GM12878 (cell line): ENCODE measurements at regions of chr13 and their contacts with region 1.

Region 1: GRCh38 chr13:46775385-46776107 is 21.4 kb downstream of the ESD start:
- DNase-seq: no peak
- ATAC-seq: no peak
- H3K4me3 ChIP-seq: no peak overlapping the region
- H3K27ac ChIP-seq: no peak overlapping the region
- H3K4me1 ChIP-seq: no peaks in the 10 kb centered on the region
- H3K27me3 ChIP-seq: no peaks in the 10 kb centered on the region
- CTCF ChIP-seq: no peak
- EP300 ChIP-seq: no peak
- POLR2A ChIP-seq: no peak
- RAD21 ChIP-seq: no peak

Region 2: DNA sequence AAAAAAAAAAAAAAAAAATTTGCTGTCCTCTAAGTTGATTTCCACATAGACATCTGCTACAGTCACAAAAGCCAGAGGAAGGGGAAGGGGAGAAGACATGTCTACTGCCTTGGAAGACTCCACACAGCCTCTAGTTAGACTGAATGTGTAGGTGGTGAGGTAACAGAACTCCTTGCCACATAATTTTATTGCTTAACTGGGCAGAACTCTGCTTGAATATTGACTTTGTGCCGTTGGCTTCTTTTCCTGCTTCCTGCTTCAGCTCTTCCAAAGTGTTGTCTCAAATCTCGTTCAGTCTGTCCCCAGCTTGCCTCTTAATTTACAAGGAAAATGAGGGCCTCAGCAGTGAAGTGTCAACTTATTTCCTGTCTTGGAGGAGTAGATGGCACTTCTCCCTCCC is 15.7 kb before region 1 on chr13:
- CTCF ChIA-PET with region 1: interaction called, 22 read pairs
- POLR2A ChIA-PET with region 1: no interaction called
- RAD21 ChIA-PET with region 1: no interaction called
- SMC1A ChIA-PET with region 1: interaction called, 5 read pairs
- in situ Hi-C with region 1: no loop called
- intact Hi-C with region 1: no loop called
- DNase-seq: no peak
- ATAC-seq: no peak
- H3K4me3 ChIP-seq: no peak overlapping the region
- H3K27ac ChIP-seq: no peak overlapping the region
- H3K4me1 ChIP-seq: no peaks in the 10 kb centered on the region
- H3K27me3 ChIP-seq: no peaks in the 10 kb centered on the region
- CTCF ChIP-seq: no peak
- EP300 ChIP-seq: no peak
- POLR2A ChIP-seq: no peak
- RAD21 ChIP-seq: no peak